H1 (cell line): ENCODE measurements at regions of chr9 and their contacts with region 1.

Region 1: DNA sequence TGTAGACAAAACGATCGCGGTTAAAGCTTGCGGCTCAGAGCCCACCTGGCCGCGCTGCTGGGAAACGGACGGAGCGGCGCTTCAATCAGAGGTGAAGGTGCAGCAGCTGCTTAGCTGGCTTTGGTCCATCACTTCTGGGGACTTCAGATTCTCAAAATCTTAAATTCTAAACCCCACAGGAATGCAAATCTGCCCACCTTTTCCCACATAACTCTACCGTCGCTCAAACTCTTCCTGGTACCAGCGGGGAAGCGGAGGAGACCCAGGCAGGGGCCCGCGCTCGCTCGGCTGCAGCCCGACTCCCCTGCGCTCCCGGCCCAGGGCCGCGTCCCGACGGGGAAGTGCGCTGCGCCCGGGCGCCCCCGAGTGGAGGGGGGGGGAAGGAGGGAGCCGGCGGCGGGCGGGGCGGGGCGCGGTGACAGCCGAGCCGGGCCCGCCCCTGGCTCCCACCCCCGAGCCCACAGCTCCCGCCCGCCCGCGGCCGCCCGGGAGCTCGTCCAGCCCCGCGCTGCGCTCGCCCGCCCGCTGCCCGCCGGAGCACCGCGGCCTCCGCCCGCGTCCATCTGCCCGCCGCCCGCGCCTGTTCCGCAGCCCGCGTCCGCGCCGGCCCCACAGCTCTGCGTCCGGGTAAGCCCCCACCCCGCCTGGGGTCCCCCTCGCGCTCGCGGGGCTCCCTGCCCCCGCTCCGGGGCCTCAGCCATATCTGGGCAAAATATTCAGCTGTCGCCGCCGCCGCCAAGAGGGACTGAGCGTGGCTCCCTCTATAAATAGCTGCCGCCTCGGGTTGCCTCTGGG is at the start of gene TMOD1:
- DNase-seq: peak in 1 of 2 experiments; percentile 80
- H3K4me3 ChIP-seq: peak within 1 kb of the TSS; percentile 50 to 69 (median 60)
- H3K27ac ChIP-seq: no peak within 1 kb of the TSS
- H3K4me1 ChIP-seq: peaks cover 0 to 6% (median 5%) of the 10 kb centered on the region in 4 experiments; a peak in 5 of 7 replicates
- H3K27me3 ChIP-seq: peaks cover 39 to 60% (median 50%) of the 10 kb centered on the region in 4 experiments
- CTCF ChIP-seq: peak in 2 of 3 experiments; percentile 14 to 15; a peak in 2 of 4 replicates
- EP300 ChIP-seq: no peak
- POLR2A ChIP-seq: no peak
- RAD21 ChIP-seq: no peak
- total RNA-seq, gene TMOD1: 0.88 and 1.1 TPM in 2 replicates

Region 2: DNA sequence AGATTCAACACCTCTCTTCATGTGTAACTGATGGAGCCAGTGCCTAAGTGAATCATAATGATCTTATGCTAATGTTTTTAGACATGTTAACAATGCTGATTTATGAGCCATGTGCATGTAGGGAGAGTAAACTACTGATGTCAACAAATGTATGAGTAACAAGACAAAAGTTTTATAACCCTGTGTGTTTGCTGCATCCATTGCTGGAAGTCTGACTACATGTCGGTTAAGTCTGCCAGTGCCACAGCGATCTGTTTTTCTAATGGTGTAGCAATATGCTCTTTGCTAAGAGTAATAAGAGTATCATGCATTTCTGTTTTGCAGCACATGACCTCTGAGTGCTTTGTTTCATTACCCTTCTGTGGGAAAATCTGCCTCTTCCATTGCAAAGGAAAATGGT is 26.3 kb before region 1 on chr9:
- CTCF ChIA-PET with region 1: interaction called, 53 read pairs
- POLR2A ChIA-PET with region 1: interaction called, 3 read pairs
- DNase-seq: no peak
- H3K4me3 ChIP-seq: no peak overlapping the region
- H3K27ac ChIP-seq: no peak overlapping the region
- H3K4me1 ChIP-seq: no peaks in the 10 kb centered on the region
- H3K27me3 ChIP-seq: no peaks in the 10 kb centered on the region
- CTCF ChIP-seq: no peak
- EP300 ChIP-seq: no peak
- POLR2A ChIP-seq: no peak
- RAD21 ChIP-seq: no peak

Region 3: DNA sequence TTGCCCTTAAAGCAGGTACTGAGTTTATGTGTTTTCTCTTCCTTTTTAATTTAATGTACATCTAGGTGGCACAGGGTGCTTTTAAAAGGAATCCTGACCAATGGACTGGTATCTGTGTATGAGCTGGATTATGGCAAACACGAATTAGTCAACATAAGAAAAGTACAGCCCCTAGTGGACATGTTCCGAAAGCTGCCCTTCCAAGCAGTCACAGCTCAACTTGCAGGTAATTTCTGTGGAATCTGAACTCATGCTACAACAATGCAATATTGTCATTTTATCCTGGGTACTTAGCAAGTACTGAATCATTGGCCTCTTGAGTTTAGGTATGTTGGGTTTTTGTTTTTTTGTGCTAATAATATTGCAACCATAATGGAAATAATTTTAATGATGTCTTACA is 14.3 kb before region 1 on chr9:
- CTCF ChIA-PET with region 1: interaction called, 38 read pairs
- POLR2A ChIA-PET with region 1: no interaction called
- DNase-seq: no peak
- H3K4me3 ChIP-seq: no peak overlapping the region
- H3K27ac ChIP-seq: no peak overlapping the region
- H3K4me1 ChIP-seq: no peaks in the 10 kb centered on the region
- H3K27me3 ChIP-seq: peaks cover 0 to 3% (median 0%) of the 10 kb centered on the region in 4 experiments; a peak in 2 of 7 replicates
- CTCF ChIP-seq: peak in 1 of 3 experiments; percentile 40; a peak in 2 of 4 replicates
- EP300 ChIP-seq: no peak
- POLR2A ChIP-seq: no peak
- RAD21 ChIP-seq: no peak

Region 4: GRCh38 chr9:97518909-97519307 is 17.5 kb after region 1 on chr9:
- CTCF ChIA-PET with region 1: interaction called, 15 read pairs
- POLR2A ChIA-PET with region 1: interaction called, 3 read pairs
- DNase-seq: no peak
- H3K4me3 ChIP-seq: no peak overlapping the region
- H3K27ac ChIP-seq: no peak overlapping the region
- H3K4me1 ChIP-seq: peaks cover 0 to 2% (median 0%) of the 10 kb centered on the region in 4 experiments; a peak in 1 of 7 replicates
- H3K27me3 ChIP-seq: no peaks in the 10 kb centered on the region; a peak in 1 of 7 replicates
- CTCF ChIP-seq: no peak
- EP300 ChIP-seq: no peak
- POLR2A ChIP-seq: no peak
- RAD21 ChIP-seq: no peak